G401 (cell line): ENCODE measurements at regions of chr20 and their contacts with region 1.

Region 1: GRCh38 chr20:59571551-59572314 is 32.6 kb upstream of the PHACTR3 start:
- DNase-seq: peak; percentile 83

Region 2: DNA sequence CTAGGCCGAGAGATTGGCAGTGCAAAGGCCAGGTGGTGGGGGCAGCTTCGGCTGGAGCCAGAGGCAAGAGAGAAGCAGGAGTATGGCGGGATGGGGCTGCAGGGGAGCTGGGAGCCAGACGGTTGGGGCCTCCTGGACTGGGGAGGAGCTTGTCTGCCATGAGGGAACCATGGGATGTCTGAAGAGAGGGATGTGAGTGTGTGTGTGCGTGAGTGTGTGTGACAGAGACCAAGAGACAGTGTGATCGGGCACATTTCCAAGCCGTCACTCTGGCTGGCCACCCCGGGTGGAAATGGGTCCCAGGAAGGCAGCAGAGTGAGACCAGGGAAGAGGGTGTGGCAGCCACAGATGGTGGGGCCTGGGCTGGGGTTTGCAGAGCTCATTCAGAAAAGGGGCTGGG is 46.4 kb after region 1 on chr20:
- in situ Hi-C with region 1: loop called (anchors 5 kb)
- DNase-seq: no peak